ENCODE measurements at regions of chr9 and their contacts with region 1.

Region 1: DNA sequence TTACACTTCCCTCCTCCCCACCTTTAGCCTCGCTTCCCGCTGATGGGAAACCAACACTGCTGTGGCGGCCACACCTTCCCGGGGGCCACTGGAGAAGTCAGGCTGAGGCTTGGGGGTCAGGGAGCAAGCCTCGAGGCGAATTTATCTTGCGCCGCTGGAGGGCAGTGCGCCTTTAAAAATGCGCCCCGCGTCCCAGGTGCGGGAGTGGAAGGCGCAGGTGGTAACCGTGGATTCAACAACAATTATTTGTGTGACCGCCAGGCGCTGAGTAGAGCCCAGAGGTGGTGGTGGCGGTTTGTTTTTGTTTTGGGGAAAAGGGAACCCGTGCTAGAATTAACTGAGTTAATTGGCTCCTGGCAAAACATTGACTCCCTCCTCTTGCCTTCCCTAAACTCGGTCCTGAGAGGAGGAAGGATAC is 1.1 kb downstream of the CFAP77 start:
- DNase-seq: peak; percentile 67
- H3K4me3 ChIP-seq: no peak overlapping the region; a peak in 2 of 4 replicates
- H3K27ac ChIP-seq: no peak overlapping the region
- H3K4me1 ChIP-seq: peaks cover 0 to 21% of the 10 kb centered on the region in 2 experiments; a peak in 2 of 4 replicates
- H3K27me3 ChIP-seq: no peaks in the 10 kb centered on the region
- CTCF ChIP-seq: peak; percentile 53
- EP300 ChIP-seq: no peak
- RAD21 ChIP-seq: peak; percentile 71

Region 2: DNA sequence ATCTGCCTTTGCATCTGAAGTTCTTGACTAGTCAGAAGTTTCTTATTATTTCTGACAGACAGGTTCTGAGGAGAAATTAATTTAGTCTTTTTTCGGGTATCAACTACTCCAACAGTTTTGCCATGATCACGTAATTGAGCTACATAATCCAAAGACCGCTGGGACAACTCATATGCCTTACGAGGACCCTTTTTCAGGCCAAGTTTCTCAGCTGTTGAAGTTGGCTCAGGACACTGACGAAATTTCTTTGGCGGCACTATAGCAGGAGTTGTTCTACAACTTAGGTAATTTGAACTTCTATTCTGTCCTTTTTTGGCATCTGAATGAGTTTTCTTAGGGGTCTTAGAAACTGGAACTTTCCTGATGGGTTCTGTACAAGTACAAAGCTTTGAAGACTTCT is 83.6 kb before region 1 on chr9:
- CTCF ChIA-PET with region 1: no interaction called
- POLR2A ChIA-PET with region 1: no interaction called
- DNase-seq: no peak
- H3K4me3 ChIP-seq: no peak overlapping the region
- H3K27ac ChIP-seq: no peak overlapping the region
- H3K4me1 ChIP-seq: no peaks in the 10 kb centered on the region
- H3K27me3 ChIP-seq: no peaks in the 10 kb centered on the region
- CTCF ChIP-seq: no peak
- EP300 ChIP-seq: no peak
- RAD21 ChIP-seq: no peak

Region 3: GRCh38 chr9:132498531-132499210 is 87.6 kb after region 1 on chr9:
- CTCF ChIA-PET with region 1: interaction called, 16 read pairs
- POLR2A ChIA-PET with region 1: interaction called, 3 read pairs
- DNase-seq: peak; percentile 67
- H3K4me3 ChIP-seq: no peak overlapping the region
- H3K27ac ChIP-seq: peak overlapping the region in 1 of 2 experiments; percentile 36; a peak in 1 of 4 replicates
- H3K4me1 ChIP-seq: peaks cover 0 to 22% of the 10 kb centered on the region in 2 experiments; a peak in 1 of 4 replicates
- H3K27me3 ChIP-seq: no peaks in the 10 kb centered on the region
- CTCF ChIP-seq: no peak
- EP300 ChIP-seq: no peak
- RAD21 ChIP-seq: 0 out of 2 replicates have a peak, but pooled peaks have one; percentile 4

Region 4: DNA sequence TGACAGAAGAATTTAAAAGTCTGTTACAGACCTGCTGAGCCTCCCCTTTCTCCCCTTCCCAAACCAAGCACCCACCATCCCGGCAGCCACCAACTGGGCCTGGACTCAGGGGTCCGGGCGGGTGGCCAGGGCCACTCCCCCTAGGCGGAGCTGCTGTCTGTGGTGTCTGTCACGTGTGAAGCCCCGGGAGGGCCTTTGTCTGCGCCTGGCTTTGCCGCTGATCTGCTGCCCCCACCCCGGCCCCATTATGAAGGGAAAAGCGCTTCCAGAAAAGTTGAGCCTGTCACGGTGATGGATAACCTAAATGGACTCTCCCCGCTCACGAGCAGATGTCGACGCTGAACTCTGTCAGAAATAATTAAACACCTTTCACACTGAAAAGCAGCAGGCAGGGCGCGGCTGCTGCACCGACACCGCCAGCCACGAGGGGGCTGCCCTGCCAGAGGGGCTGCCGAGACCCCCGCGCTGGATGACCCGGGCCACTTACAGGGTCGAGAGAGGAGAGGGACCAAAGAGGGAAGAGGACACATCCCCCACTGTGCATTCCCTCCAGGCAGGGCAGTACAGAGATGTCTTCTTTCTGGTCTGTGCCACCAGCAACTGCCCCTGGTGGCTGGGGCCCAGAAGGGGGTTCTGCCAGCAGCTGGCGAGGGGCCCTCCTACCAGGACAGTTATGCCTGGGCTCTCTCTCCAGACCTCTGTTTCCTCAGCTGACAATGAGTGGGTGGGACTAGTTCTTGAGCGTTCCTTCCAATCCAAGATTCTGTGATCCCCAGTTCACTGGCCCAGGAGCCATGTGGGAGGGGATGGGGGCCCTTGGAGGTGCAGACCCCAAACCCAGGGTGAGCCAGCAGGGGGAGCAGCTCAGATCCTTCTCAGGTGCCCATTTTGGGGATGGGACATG is 135.3 kb after region 1 on chr9:
- CTCF ChIA-PET with region 1: interaction called, 14 read pairs
- POLR2A ChIA-PET with region 1: no interaction called
- DNase-seq: peak; percentile 96
- H3K4me3 ChIP-seq: peak overlapping the region; percentile 24 to 29; a peak in 3 of 4 replicates
- H3K27ac ChIP-seq: peak overlapping the region in 1 of 2 experiments; percentile 85; a peak in 2 of 4 replicates
- H3K4me1 ChIP-seq: peaks cover 0 to 49% of the 10 kb centered on the region in 2 experiments; a peak in 1 of 4 replicates
- H3K27me3 ChIP-seq: no peaks in the 10 kb centered on the region
- CTCF ChIP-seq: peak; percentile 51
- EP300 ChIP-seq: peak in 1 of 2 experiments; percentile 91; a peak in 2 of 4 replicates
- RAD21 ChIP-seq: no peak; the same call in 1 of the 2 replicates

Region 5: GRCh38 chr9:132923346-132923902 is 512.3 kb after region 1 on chr9:
- CTCF ChIA-PET with region 1: no interaction called
- POLR2A ChIA-PET with region 1: no interaction called
- DNase-seq: no peak
- H3K4me3 ChIP-seq: no peak overlapping the region
- H3K27ac ChIP-seq: no peak overlapping the region
- H3K4me1 ChIP-seq: no peaks in the 10 kb centered on the region
- H3K27me3 ChIP-seq: no peaks in the 10 kb centered on the region
- CTCF ChIP-seq: no peak
- EP300 ChIP-seq: no peak
- RAD21 ChIP-seq: no peak